ENCODE measurements at regions of chr6 and their contacts with region 1.

Region 1: DNA sequence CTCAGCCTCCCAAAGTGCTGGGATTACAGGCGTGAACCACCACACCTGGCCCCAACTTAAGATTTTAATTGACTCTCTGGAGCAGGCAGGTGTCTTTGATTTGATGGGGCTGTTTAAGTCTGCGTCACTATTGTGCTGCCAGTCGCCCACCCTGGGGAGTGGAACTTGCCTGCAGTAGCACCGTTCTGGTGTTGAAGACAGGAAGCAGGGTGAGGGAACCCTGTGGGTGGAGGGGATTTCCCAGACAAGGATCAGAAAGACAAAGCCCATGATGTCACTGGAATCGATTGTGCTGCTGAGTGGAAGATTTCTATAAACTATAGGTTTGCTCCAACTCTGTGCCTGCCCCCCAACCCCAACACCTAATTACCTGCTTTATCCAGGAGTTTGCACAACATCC is 11.0 kb downstream of the ALDH8A1 start:
- DNase-seq: peak in 4 of 5 donors; percentile 6 to 83 (median 24)
- H3K4me3 ChIP-seq: no peak overlapping the region
- H3K4me3 Mint-ChIP-seq: no peak overlapping the region
- H3K27ac ChIP-seq: no peak overlapping the region
- H3K27ac Mint-ChIP-seq: peak overlapping the region in 2 of 7 donors; percentile 42 to 46
- H3K4me1 ChIP-seq: peaks cover 6% of the 10 kb centered on the region
- H3K4me1 Mint-ChIP-seq: peaks cover 0 to 11% (median 0%) of the 10 kb centered on the region in 4 donors
- H3K27me3 ChIP-seq: no peaks in the 10 kb centered on the region
- H3K27me3 Mint-ChIP-seq: no peaks in the 10 kb centered on the region

Region 2: DNA sequence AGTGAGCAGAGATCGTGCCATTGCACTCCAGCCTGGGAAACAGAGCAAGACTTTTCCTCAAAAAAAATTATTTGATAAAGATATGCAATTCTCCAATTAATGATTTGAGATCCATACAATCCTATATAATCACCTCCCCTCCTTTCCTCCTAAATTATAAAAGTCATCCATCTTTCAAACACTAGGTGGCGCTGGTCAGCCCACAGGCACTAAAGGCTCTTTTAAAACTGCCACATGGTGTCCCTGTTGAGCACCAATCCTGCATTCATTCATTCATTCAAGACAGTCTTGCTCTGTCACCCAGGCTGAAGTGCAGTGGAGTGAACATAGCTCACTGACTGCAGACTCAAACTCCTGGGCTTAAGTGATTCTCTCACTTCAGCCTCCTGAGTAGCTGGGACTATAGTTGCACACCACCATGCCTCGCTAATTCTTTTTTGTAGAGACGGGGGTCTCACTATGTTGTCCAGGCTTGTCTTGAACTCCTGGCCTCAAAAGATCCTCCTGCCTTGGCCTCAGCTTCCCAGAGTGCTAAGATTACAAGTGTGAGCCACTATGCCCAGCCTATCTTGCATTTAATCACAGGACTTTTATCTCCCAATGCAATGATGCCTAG is 827.7 kb before region 1 on chr6:
- CTCF ChIA-PET with region 1: interaction called, 52 read pairs
- POLR2A ChIA-PET with region 1: no interaction called
- intact Hi-C with region 1: loop called (anchors 1 kb)
- DNase-seq: peak; percentile 43 to 67 (median 57)
- H3K4me3 ChIP-seq: no peak overlapping the region
- H3K4me3 Mint-ChIP-seq: no peak overlapping the region
- H3K27ac ChIP-seq: no peak overlapping the region
- H3K27ac Mint-ChIP-seq: no peak overlapping the region
- H3K4me1 ChIP-seq: no peaks in the 10 kb centered on the region
- H3K4me1 Mint-ChIP-seq: peaks cover 0 to 5% (median 0%) of the 10 kb centered on the region in 4 donors
- H3K27me3 ChIP-seq: no peaks in the 10 kb centered on the region
- H3K27me3 Mint-ChIP-seq: peaks cover 4 to 20% of the 10 kb centered on the region in 2 donors

Region 3: DNA sequence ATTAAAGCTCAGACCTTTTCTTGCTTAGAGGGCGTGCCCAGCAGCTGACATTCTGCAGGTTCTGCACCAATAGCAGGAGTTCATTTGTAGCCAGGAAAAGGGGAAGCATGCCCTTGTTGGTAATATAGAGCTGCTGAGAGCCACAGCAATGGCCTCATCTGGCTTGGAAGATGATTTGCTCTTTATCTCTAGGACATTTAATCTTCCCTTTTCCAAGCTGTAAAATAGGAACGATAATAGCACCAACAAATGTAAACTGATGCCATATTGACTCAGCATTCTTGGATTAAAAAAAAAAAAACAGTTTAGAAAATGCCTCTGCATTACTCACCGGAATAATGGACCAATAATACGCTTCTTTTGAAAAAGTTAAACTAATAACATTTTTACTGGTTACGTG is 793.1 kb before region 1 on chr6:
- CTCF ChIA-PET with region 1: interaction called, 10 read pairs
- POLR2A ChIA-PET with region 1: no interaction called
- intact Hi-C with region 1: no loop called
- DNase-seq: no peak
- H3K4me3 ChIP-seq: no peak overlapping the region
- H3K4me3 Mint-ChIP-seq: no peak overlapping the region
- H3K27ac ChIP-seq: no peak overlapping the region
- H3K27ac Mint-ChIP-seq: no peak overlapping the region
- H3K4me1 ChIP-seq: no peaks in the 10 kb centered on the region
- H3K4me1 Mint-ChIP-seq: no peaks in the 10 kb centered on the region
- H3K27me3 ChIP-seq: no peaks in the 10 kb centered on the region
- H3K27me3 Mint-ChIP-seq: peaks cover 0 to 4% of the 10 kb centered on the region in 2 donors

Region 4: GRCh38 chr6:134161036-134161435 is 777.9 kb before region 1 on chr6:
- CTCF ChIA-PET with region 1: interaction called, 89 read pairs
- POLR2A ChIA-PET with region 1: no interaction called
- intact Hi-C with region 1: loop called (anchors 1 kb)
- DNase-seq: no peak
- H3K4me3 ChIP-seq: no peak overlapping the region
- H3K4me3 Mint-ChIP-seq: no peak overlapping the region
- H3K27ac ChIP-seq: no peak overlapping the region
- H3K27ac Mint-ChIP-seq: no peak overlapping the region
- H3K4me1 ChIP-seq: no peaks in the 10 kb centered on the region
- H3K4me1 Mint-ChIP-seq: no peaks in the 10 kb centered on the region
- H3K27me3 ChIP-seq: no peaks in the 10 kb centered on the region
- H3K27me3 Mint-ChIP-seq: no peaks in the 10 kb centered on the region

Region 5: DNA sequence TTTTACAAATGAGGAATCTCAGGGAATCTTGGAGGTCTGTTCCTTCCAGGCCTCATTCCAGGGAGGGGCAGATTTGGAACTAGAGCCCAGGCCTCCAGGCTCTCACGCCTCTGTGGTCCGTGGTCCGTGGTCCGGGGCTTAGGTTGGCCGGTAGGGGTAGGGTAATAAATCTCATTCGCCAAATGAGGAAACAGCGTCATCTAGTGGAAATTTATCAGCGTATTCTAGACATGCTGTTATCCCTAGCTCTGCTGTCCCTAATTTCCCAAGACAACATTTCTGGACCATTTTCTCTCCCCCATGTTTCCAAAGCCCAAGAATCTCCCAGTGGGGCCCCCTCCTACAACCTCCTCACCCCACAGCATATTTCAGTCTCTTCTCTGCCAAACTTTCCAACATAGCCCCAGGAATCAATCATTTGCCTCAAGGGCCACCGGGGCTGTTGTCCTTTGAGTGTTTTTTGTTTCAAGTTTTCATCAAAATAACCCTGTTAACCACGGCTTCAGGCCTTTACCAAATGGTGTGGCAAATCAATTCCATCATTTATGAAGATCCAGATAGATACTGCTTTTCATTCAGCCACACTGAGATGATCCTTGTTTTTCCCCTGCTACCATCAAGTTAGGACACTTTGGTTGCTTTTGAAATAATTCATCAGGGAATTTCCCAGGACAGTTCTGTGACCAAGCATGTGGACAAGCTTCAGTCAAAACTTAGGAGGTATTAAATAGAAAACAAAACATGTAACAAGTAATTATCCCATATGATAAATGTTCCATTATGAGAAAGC is 115.8 kb before region 1 on chr6:
- CTCF ChIA-PET with region 1: interaction called, 17 read pairs
- POLR2A ChIA-PET with region 1: no interaction called
- intact Hi-C with region 1: loop called (anchors 5 kb)
- DNase-seq: peak in 4 of 5 donors; percentile 46 to 54 (median 51)
- H3K4me3 ChIP-seq: no peak overlapping the region
- H3K4me3 Mint-ChIP-seq: no peak overlapping the region
- H3K27ac ChIP-seq: no peak overlapping the region
- H3K27ac Mint-ChIP-seq: no peak overlapping the region
- H3K4me1 ChIP-seq: no peaks in the 10 kb centered on the region
- H3K4me1 Mint-ChIP-seq: peaks cover 0 to 3% (median 0%) of the 10 kb centered on the region in 4 donors
- H3K27me3 ChIP-seq: no peaks in the 10 kb centered on the region
- H3K27me3 Mint-ChIP-seq: peaks cover 3 to 7% of the 10 kb centered on the region in 2 donors

Region 6: DNA sequence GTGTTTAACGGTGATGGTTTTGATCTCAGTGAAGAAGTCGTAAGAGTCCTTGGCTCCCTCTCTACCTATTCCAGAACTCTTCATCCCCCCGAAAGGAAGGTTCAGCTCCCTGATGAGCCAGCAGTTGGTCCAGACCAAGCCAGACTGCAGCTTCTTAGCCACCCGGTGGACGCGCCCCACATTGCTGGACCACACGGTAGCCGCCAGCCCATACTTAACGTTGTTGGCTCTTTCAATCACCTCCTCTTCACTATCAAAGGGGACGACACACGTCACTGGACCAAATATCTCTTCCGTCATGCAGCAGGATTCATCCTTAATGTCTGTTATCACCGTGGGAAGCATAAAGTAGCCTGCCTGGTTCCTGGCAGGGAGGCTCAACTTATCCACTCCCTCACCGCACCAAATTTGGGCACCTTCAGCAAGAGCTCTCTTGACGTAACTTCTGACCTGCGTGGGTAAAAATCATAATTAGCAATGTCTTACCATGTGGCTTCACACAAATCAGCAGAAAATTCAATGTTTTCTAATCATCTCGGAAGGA is 20.4 kb before region 1 on chr6:
- CTCF ChIA-PET with region 1: interaction called, 18 read pairs
- POLR2A ChIA-PET with region 1: no interaction called
- intact Hi-C with region 1: no loop called
- DNase-seq: no peak
- H3K4me3 ChIP-seq: no peak overlapping the region
- H3K4me3 Mint-ChIP-seq: no peak overlapping the region
- H3K27ac ChIP-seq: no peak overlapping the region
- H3K27ac Mint-ChIP-seq: no peak overlapping the region
- H3K4me1 ChIP-seq: no peaks in the 10 kb centered on the region
- H3K4me1 Mint-ChIP-seq: no peaks in the 10 kb centered on the region
- H3K27me3 ChIP-seq: no peaks in the 10 kb centered on the region
- H3K27me3 Mint-ChIP-seq: no peaks in the 10 kb centered on the region

Region 7: GRCh38 chr6:134967711-134968110 is 28.8 kb after region 1 on chr6:
- CTCF ChIA-PET with region 1: interaction called, 15 read pairs
- POLR2A ChIA-PET with region 1: no interaction called
- intact Hi-C with region 1: no loop called
- DNase-seq: no peak
- H3K4me3 ChIP-seq: no peak overlapping the region
- H3K4me3 Mint-ChIP-seq: no peak overlapping the region
- H3K27ac ChIP-seq: no peak overlapping the region
- H3K27ac Mint-ChIP-seq: no peak overlapping the region
- H3K4me1 ChIP-seq: no peaks in the 10 kb centered on the region
- H3K4me1 Mint-ChIP-seq: no peaks in the 10 kb centered on the region
- H3K27me3 ChIP-seq: no peaks in the 10 kb centered on the region
- H3K27me3 Mint-ChIP-seq: no peaks in the 10 kb centered on the region

Region 8: DNA sequence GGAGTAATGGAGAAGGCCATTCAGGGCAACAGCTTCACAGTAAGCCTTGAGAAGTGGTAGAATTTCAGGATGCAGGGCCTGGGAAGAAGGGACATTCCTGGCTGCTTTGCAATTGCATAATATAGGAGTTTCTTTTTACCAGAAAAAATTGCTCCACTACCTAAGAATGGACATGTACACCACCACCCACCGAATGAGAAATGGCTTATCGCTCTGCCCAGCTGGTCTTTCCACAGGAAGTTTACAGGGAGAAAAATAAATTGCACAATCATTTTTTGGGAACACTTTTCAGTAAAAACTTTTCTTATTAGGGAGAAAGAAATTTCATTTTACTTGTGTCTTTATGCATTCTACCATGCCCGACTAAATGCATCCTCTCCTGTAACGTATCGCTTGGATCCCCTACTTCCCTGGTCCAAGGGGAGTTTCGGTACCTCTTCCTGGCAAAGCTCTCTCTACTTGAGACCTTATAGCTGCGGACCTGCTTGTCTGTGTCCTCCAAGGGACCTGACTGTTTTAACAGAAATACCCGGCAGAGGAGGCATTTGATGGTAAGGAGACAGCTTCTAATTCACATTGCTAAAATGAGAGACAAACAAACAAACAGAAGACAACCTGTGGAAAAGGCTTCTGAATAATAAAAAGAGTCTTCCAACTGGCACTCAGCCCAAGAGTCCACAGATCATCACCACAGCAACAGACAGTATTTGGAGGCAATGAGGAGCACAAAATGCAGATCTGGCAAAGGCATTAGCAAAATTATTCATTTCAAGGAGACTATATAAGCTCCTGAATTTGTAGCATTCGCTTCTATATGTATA is 1799.2 kb after region 1 on chr6:
- CTCF ChIA-PET with region 1: no interaction called
- POLR2A ChIA-PET with region 1: no interaction called
- intact Hi-C with region 1: no loop called
- DNase-seq: no peak
- H3K4me3 ChIP-seq: no peak overlapping the region
- H3K4me3 Mint-ChIP-seq: no peak overlapping the region
- H3K27ac ChIP-seq: no peak overlapping the region
- H3K27ac Mint-ChIP-seq: peak overlapping the region in 1 of 7 donors; percentile 51
- H3K4me1 ChIP-seq: peaks cover 22% of the 10 kb centered on the region
- H3K4me1 Mint-ChIP-seq: peaks cover 33 to 68% (median 55%) of the 10 kb centered on the region in 4 donors
- H3K27me3 ChIP-seq: no peaks in the 10 kb centered on the region
- H3K27me3 Mint-ChIP-seq: no peaks in the 10 kb centered on the region